Mammary epithelial cell (primary cell): ENCODE measurements at regions of chr4 and their contacts with region 1.

Region 1: GRCh38 chr4:81844717-81845116 is 373.0 kb upstream of the RASGEF1B start:
- DNase-seq: peak; percentile 76
- H3K4me3 ChIP-seq: no peak overlapping the region
- H3K27ac ChIP-seq: no peak overlapping the region
- H3K4me1 ChIP-seq: no peaks in the 10 kb centered on the region
- H3K27me3 ChIP-seq: no peaks in the 10 kb centered on the region
- CTCF ChIP-seq: peak; percentile 61 to 75

Region 2: GRCh38 chr4:81069706-81070331 is 774.9 kb before region 1 on chr4:
- CTCF ChIA-PET with region 1: no interaction called
- dilution Hi-C with region 1: no loop called
- in situ Hi-C with region 1: no loop called
- intact Hi-C with region 1: loop called (anchors 10 kb)
- DNase-seq: peak; percentile 73
- H3K4me3 ChIP-seq: no peak overlapping the region
- H3K27ac ChIP-seq: no peak overlapping the region
- H3K4me1 ChIP-seq: no peaks in the 10 kb centered on the region
- H3K27me3 ChIP-seq: no peaks in the 10 kb centered on the region
- CTCF ChIP-seq: peak; percentile 94 to 95

Region 3: DNA sequence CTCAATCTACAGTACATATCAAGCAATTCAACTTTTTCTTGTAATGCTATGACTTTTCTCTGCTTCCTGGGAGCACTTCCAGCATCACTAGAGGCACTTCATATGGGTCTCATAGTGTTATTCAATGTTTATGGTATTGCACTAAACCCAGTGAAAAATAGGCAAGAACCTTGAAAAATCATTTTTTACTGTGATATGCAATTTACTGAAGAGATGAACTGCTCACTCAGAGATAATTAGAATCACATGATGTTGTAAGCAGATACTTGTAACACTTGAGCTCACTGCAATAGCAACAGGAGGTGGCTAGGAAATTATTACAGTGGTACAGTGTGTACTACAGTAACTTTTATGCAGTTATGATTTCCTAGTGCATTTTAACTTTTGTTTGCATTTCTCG is 466.3 kb before region 1 on chr4:
- CTCF ChIA-PET with region 1: no interaction called
- dilution Hi-C with region 1: no loop called
- in situ Hi-C with region 1: no loop called
- intact Hi-C with region 1: no loop called
- DNase-seq: no peak
- H3K4me3 ChIP-seq: no peak overlapping the region
- H3K27ac ChIP-seq: no peak overlapping the region
- H3K4me1 ChIP-seq: no peaks in the 10 kb centered on the region
- H3K27me3 ChIP-seq: peaks cover 7% of the 10 kb centered on the region
- CTCF ChIP-seq: no peak

Region 4: GRCh38 chr4:81688085-81688484 is 156.6 kb before region 1 on chr4:
- CTCF ChIA-PET with region 1: no interaction called
- dilution Hi-C with region 1: no loop called
- in situ Hi-C with region 1: no loop called
- intact Hi-C with region 1: loop called (anchors 2 kb)
- DNase-seq: peak; percentile 6
- H3K4me3 ChIP-seq: no peak overlapping the region
- H3K27ac ChIP-seq: no peak overlapping the region
- H3K4me1 ChIP-seq: no peaks in the 10 kb centered on the region
- H3K27me3 ChIP-seq: no peaks in the 10 kb centered on the region
- CTCF ChIP-seq: peak in 1 of 2 donors; percentile 42

Region 5: DNA sequence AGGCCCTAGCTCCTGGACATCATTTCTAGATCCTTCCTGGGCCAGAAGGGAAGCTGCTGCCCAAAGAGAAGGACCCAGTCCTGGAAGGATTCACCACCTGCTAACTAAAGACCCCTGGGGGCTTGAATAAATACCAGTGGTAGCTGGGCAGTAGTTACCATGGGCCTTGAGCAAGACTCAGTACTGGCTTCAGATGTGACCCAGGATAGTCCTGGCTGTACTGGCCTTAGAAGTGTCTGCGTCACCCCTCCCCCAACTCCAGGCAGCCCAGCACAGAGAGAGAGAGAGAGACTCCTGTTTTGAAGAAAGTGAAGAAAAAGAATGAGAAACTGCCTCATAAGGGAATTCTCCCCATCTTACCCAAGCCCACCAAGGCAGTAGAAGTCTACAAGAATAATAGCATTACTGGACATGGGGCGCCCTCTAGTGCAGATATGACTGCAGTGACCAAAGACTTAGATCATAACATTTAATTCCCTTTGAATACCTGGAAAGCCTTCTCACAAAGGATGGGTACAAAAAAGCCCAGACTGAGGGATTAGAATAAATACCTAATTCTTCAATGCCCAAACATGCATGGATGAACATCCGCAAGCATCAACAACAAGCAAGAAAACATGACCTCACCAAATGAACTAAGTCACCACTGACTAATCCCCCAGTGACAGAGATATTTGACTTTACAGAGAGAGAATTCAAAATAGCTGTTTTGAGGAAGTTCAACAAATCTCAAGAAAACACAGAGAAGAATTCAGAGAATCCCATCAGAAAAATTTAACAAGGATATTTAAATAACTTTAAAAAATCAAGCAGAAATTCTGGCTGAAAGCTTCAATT is 357.3 kb after region 1 on chr4:
- CTCF ChIA-PET with region 1: no interaction called
- dilution Hi-C with region 1: no loop called
- in situ Hi-C with region 1: no loop called
- intact Hi-C with region 1: loop called (anchors 1 kb)
- DNase-seq: peak; percentile 29
- H3K4me3 ChIP-seq: no peak overlapping the region
- H3K27ac ChIP-seq: no peak overlapping the region
- H3K4me1 ChIP-seq: peaks cover 11% of the 10 kb centered on the region
- H3K27me3 ChIP-seq: no peaks in the 10 kb centered on the region
- CTCF ChIP-seq: peak; percentile 70 to 81